ENCODE measurements at regions of chr15 and their contacts with region 1.

Region 1: GRCh38 chr15:72599855-72600464 is 54.5 kb upstream of the GOLGA6B start:
- DNase-seq: peak; percentile 40
- ATAC-seq: no peak
- H3K4me3 ChIP-seq: no peak overlapping the region
- H3K4me3 Mint-ChIP-seq: no peak overlapping the region
- H3K27ac ChIP-seq: no peak overlapping the region
- H3K27ac Mint-ChIP-seq: no peak overlapping the region
- H3K4me1 ChIP-seq: no peaks in the 10 kb centered on the region
- H3K4me1 Mint-ChIP-seq: no peaks in the 10 kb centered on the region
- H3K27me3 ChIP-seq: no peaks in the 10 kb centered on the region
- H3K27me3 Mint-ChIP-seq: peaks cover 5% of the 10 kb centered on the region
- CTCF ChIP-seq: peak; percentile 79

Region 2: DNA sequence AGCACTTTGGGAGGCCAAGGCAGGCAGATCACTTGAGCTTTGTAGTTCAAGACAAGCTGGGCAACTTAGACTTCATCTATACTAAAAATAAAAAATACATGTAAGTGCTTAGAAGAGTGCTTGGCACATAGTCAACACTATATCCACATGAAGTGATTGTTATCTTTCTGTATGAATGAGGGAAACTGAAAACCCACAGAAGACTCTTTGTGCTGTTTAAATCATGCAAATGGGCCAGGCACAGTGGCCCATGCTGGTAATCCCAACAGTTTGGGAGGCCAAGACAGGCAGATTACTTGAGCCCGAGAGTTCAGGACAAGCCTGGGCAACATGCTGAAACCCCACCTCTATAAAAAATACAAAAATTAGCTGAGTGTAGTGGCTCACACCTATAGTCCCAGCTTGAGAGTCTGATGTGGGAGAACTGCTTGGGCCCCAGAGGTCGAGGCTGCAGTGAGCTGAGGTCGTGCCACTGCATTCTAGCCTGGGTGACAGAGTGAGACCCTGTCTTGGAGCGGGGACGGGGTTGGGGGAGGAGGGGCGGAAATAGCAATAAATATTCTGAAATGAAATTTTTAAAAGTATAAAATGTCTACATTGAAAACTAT is 659.9 kb before region 1 on chr15:
- CTCF ChIA-PET with region 1: no interaction called
- POLR2A ChIA-PET with region 1: no interaction called
- intact Hi-C with region 1: no loop called
- DNase-seq: no peak
- ATAC-seq: no peak
- H3K4me3 ChIP-seq: no peak overlapping the region
- H3K4me3 Mint-ChIP-seq: no peak overlapping the region
- H3K27ac ChIP-seq: no peak overlapping the region
- H3K27ac Mint-ChIP-seq: no peak overlapping the region
- H3K4me1 ChIP-seq: no peaks in the 10 kb centered on the region
- H3K4me1 Mint-ChIP-seq: no peaks in the 10 kb centered on the region
- H3K27me3 ChIP-seq: no peaks in the 10 kb centered on the region
- H3K27me3 Mint-ChIP-seq: no peaks in the 10 kb centered on the region
- CTCF ChIP-seq: no peak

Region 3: GRCh38 chr15:72671535-72671934 is 71.6 kb after region 1 on chr15:
- CTCF ChIA-PET with region 1: interaction called, 19 read pairs
- POLR2A ChIA-PET with region 1: no interaction called
- intact Hi-C with region 1: no loop called
- DNase-seq: no peak
- ATAC-seq: no peak
- H3K4me3 ChIP-seq: no peak overlapping the region
- H3K4me3 Mint-ChIP-seq: no peak overlapping the region
- H3K27ac ChIP-seq: no peak overlapping the region
- H3K27ac Mint-ChIP-seq: no peak overlapping the region
- H3K4me1 ChIP-seq: peaks cover 3 to 5% of the 10 kb centered on the region in 2 donors
- H3K4me1 Mint-ChIP-seq: peaks cover 4% of the 10 kb centered on the region
- H3K27me3 ChIP-seq: peaks cover 0 to 5% (median 2%) of the 10 kb centered on the region in 4 experiments
- H3K27me3 Mint-ChIP-seq: peaks cover 15% of the 10 kb centered on the region
- CTCF ChIP-seq: no peak